ENCODE measurements at regions of chr1 and their contacts with region 1.

Region 1: GRCh38 chr1:62386351-62387121 is 50.3 kb upstream of the USP1 start:
- DNase-seq: peak; percentile 95
- H3K4me3 ChIP-seq: no peak overlapping the region
- H3K27ac ChIP-seq: peak overlapping the region; percentile 79
- H3K4me1 ChIP-seq: peaks cover 47% of the 10 kb centered on the region
- H3K27me3 ChIP-seq: peaks cover 23% of the 10 kb centered on the region
- CTCF ChIP-seq: no peak

Region 2: GRCh38 chr1:62401034-62401760 is 14.7 kb after region 1 on chr1:
- CTCF ChIA-PET with region 1: no interaction called
- POLR2A ChIA-PET with region 1: no interaction called
- intact Hi-C with region 1: loop called (anchors 2 kb)
- DNase-seq: peak; percentile 86
- H3K4me3 ChIP-seq: no peak overlapping the region
- H3K27ac ChIP-seq: no peak overlapping the region
- H3K4me1 ChIP-seq: no peaks in the 10 kb centered on the region
- H3K27me3 ChIP-seq: peaks cover 9% of the 10 kb centered on the region
- CTCF ChIP-seq: no peak

Region 3: DNA sequence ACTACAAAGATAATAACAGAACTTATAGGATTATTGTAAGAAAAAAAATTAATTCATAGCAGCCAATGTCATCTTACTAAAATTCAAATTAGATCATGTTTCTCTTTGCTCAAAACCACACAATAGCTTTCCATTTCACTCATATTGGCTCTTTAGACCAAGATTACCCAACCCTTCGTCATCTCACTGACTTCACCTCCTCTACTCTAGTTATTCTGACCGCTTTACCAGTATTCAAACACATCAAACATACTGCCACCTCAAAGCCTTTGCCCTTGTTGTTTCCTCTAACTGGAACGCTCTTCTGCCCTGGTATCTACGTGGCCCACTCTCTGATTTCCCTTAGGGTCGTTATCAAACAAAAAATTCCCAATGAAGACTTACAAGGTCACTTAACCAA is 212.5 kb after region 1 on chr1:
- CTCF ChIA-PET with region 1: no interaction called
- POLR2A ChIA-PET with region 1: no interaction called
- intact Hi-C with region 1: no loop called
- DNase-seq: no peak
- H3K4me3 ChIP-seq: no peak overlapping the region
- H3K27ac ChIP-seq: no peak overlapping the region
- H3K4me1 ChIP-seq: peaks cover 5% of the 10 kb centered on the region
- H3K27me3 ChIP-seq: no peaks in the 10 kb centered on the region
- CTCF ChIP-seq: no peak

Measured in A673 (cell line).